ENCODE measurements at regions of chr15 and their contacts with region 1.

Region 1: DNA sequence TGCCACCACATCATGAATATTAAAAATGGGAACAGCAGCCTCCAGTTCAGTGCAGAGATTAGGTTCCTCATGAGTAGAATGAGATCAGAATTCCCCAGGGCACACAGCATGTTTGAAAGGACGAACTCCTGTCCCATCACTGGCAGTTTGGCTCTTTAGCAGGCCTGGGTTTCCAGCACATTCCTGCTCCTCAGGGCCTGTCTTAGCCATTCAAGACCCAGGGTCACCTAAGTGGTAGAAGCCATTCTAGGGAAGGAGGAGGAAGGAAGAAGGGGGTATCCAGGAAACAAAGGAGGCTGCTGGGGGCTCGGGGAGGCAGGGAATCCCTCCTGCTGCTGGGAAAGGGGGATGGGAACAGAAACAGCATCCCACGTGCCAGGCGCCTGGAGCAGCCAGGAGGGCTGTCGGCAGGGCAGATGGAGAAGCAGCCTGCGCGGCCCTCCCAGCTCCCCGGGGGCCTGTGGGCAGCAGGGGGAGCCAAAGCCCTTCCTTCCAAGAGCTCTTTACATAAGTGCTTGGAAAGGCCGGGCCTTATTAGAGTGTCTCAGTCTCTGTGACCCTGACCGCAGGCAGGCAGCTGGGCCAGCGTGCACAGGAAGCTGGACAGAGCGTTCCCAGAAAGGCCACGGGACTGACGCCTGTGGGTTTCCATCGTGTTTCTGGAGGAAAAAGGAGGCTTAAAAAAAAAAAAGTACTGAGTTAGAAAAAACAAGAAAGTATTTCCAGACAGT is 24.7 kb downstream of the LOXL1 start:
- DNase-seq: peak; percentile 98
- H3K4me3 ChIP-seq: no peak overlapping the region
- H3K27ac ChIP-seq: peak overlapping the region; percentile 91 to 98 (median 94)
- H3K4me1 ChIP-seq: peaks cover 0 to 23% (median 18%) of the 10 kb centered on the region in 4 donors
- H3K27me3 ChIP-seq: no peaks in the 10 kb centered on the region
- CTCF ChIP-seq: peak; percentile 54 to 72 (median 69)
- EP300 ChIP-seq: peak in 2 of 4 donors; percentile 47 to 68
- POLR2A ChIP-seq: no peak

Region 2: DNA sequence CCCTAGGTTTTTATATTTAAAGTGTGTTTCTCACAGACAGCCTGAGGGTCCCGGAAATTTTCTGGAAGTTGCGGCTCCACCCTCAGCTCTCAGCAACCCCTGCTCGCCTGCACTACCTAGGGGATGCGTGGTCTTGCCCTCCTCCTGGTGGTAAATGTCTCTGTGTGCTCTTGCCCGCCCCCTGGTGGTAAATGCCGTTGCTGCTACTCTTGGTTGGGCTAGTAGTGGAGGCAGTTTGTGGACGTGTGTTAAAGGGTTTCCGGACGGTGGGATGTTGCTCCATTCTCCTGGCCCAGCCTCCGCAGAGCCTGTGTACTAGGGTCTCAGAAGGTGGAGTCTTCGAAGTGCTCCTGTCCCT is 13.7 kb after region 1 on chr15:
- intact Hi-C with region 1: loop called (anchors 1 kb)
- DNase-seq: peak; percentile 90
- H3K4me3 ChIP-seq: no peak overlapping the region
- H3K27ac ChIP-seq: no peak overlapping the region
- H3K4me1 ChIP-seq: peaks cover 0 to 10% (median 5%) of the 10 kb centered on the region in 4 donors
- H3K27me3 ChIP-seq: no peaks in the 10 kb centered on the region
- CTCF ChIP-seq: peak; percentile 90 to 98 (median 94)
- EP300 ChIP-seq: no peak
- POLR2A ChIP-seq: no peak

Measured in sigmoid colon (tissue), 7 donors.